ENCODE measurements at regions of chr5 and their contacts with region 1.

Region 1: DNA sequence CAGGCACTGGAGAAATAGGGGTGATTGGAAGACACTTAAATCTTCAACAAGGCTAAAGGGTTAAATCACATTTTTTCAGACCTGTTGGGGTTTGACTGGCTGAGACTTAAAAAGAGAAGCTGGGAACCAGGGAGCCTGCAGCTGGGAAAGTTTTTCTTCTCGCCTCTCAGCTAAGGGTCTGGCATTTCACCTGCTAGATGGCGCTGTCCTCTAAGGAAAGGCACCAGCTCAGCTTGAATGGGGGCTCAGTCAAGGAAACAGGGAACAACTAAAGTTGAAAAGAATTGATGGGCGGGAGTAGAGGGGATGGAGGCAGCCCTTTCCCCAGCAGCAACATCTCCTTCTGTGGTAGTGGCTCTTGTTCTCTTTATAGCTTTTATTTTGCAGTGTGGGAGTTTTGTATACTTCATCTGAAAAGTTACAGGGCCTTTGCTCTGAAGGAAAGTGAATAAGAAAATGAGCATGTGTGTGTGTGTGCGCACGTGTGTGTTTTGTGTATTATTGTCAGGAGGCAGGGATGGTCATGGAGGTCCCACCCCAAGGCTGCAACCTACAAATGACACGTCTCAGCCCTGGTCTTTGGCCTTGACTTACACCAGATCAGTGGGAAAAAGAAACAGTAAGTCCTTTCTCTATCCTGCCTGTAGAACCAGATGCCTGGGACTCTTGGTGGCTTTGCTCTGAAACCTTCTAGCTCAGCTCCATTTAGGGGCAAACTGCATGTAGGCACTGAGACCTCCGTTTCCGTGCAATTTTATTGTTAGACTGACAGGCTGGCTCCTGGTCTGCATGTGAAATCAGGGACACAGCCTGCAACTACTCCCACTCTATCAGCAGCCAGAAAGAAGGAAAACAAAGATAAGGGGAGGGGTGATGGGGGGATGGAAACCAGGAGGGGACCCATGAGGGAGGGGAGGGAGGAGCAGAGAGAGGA is 316.2 kb upstream of the CLINT1 start:
- DNase-seq: peak; percentile 77
- H3K4me3 ChIP-seq: no peak overlapping the region
- H3K27ac ChIP-seq: peak overlapping the region in 3 of 4 donors; percentile 30 to 40 (median 37)
- H3K4me1 ChIP-seq: peaks cover 8 to 30% (median 16%) of the 10 kb centered on the region in 4 donors
- H3K27me3 ChIP-seq: no peaks in the 10 kb centered on the region
- CTCF ChIP-seq: peak; percentile 62 to 80 (median 73)
- EP300 ChIP-seq: no peak
- POLR2A ChIP-seq: no peak

Region 2: GRCh38 chr5:156526081-156526925 is 1648.9 kb before region 1 on chr5:
- in situ Hi-C with region 1: no loop called
- intact Hi-C with region 1: loop called (anchors 10 kb)
- DNase-seq: no peak
- H3K4me3 ChIP-seq: no peak overlapping the region
- H3K27ac ChIP-seq: no peak overlapping the region
- H3K4me1 ChIP-seq: no peaks in the 10 kb centered on the region
- H3K27me3 ChIP-seq: no peaks in the 10 kb centered on the region
- CTCF ChIP-seq: no peak
- EP300 ChIP-seq: no peak
- POLR2A ChIP-seq: no peak

Region 3: GRCh38 chr5:158054223-158055110 is 120.7 kb before region 1 on chr5:
- in situ Hi-C with region 1: no loop called
- intact Hi-C with region 1: no loop called
- DNase-seq: no peak
- H3K4me3 ChIP-seq: no peak overlapping the region
- H3K27ac ChIP-seq: no peak overlapping the region
- H3K4me1 ChIP-seq: peaks cover 0 to 18% (median 7%) of the 10 kb centered on the region in 4 donors
- H3K27me3 ChIP-seq: no peaks in the 10 kb centered on the region
- CTCF ChIP-seq: no peak
- EP300 ChIP-seq: no peak
- POLR2A ChIP-seq: no peak

Region 4: GRCh38 chr5:158313733-158314464 is 138.7 kb after region 1 on chr5:
- in situ Hi-C with region 1: no loop called
- intact Hi-C with region 1: no loop called
- DNase-seq: no peak
- H3K4me3 ChIP-seq: no peak overlapping the region
- H3K27ac ChIP-seq: no peak overlapping the region
- H3K4me1 ChIP-seq: no peaks in the 10 kb centered on the region
- H3K27me3 ChIP-seq: no peaks in the 10 kb centered on the region
- CTCF ChIP-seq: no peak
- EP300 ChIP-seq: no peak
- POLR2A ChIP-seq: no peak

Region 5: GRCh38 chr5:158695595-158696330 is 520.6 kb after region 1 on chr5:
- in situ Hi-C with region 1: no loop called
- intact Hi-C with region 1: loop called (anchors 10 kb)
- DNase-seq: peak; percentile 72
- H3K4me3 ChIP-seq: no peak overlapping the region
- H3K27ac ChIP-seq: no peak overlapping the region
- H3K4me1 ChIP-seq: peaks cover 0 to 5% (median 0%) of the 10 kb centered on the region in 4 donors
- H3K27me3 ChIP-seq: peaks cover 11% of the 10 kb centered on the region
- CTCF ChIP-seq: peak; percentile 83 to 97 (median 95)
- EP300 ChIP-seq: no peak
- POLR2A ChIP-seq: no peak

Region 6: GRCh38 chr5:159106569-159107282 is 931.5 kb after region 1 on chr5:
- in situ Hi-C with region 1: loop called (anchors 5 to 25 kb)
- intact Hi-C with region 1: loop called (anchors 2 kb)
- DNase-seq: peak; percentile 74
- H3K4me3 ChIP-seq: peak overlapping the region in 3 of 4 donors; percentile 6 to 41 (median 17)
- H3K27ac ChIP-seq: no peak overlapping the region
- H3K4me1 ChIP-seq: peaks cover 0 to 9% (median 8%) of the 10 kb centered on the region in 4 donors
- H3K27me3 ChIP-seq: peaks cover 100% of the 10 kb centered on the region
- CTCF ChIP-seq: peak; percentile 79 to 87 (median 81)
- EP300 ChIP-seq: no peak
- POLR2A ChIP-seq: no peak

Region 7: DNA sequence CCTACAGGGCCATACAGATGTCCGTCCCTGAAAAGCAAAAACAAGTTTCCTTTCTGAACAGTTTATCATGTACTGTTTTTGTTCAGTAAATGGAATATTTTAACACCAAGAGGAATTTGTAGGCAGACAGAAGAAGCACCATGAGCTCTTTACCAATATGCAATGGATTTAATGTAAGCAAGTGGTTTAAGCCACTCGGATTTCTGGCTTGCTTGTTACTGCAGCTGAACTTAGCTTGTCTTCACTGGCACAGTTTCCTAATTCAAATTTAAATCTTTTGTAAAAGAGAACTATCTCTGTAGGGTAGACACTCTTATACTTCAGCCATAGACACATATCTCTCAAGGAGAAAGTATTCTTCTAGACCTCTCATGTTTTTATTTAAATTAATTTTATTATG is 937.3 kb after region 1 on chr5:
- in situ Hi-C with region 1: loop called (anchors 5 to 25 kb)
- intact Hi-C with region 1: loop called (anchors 2 kb)
- DNase-seq: no peak
- H3K4me3 ChIP-seq: no peak overlapping the region
- H3K27ac ChIP-seq: no peak overlapping the region
- H3K4me1 ChIP-seq: no peaks in the 10 kb centered on the region
- H3K27me3 ChIP-seq: peaks cover 50% of the 10 kb centered on the region
- CTCF ChIP-seq: no peak
- EP300 ChIP-seq: no peak
- POLR2A ChIP-seq: no peak